ENCODE measurements at regions of chr5 and their contacts with region 1.

Region 1: GRCh38 chr5:43401827-43402226 is 10.4 kb downstream of the CCL28 start:
- DNase-seq: peak; percentile 72
- ATAC-seq: peak; percentile 100
- H3K4me3 ChIP-seq: peak overlapping the region; percentile 53 to 78 (median 59)
- H3K27ac ChIP-seq: peak overlapping the region; percentile 71
- H3K4me1 ChIP-seq: peaks cover 10% of the 10 kb centered on the region
- H3K27me3 ChIP-seq: no peaks in the 10 kb centered on the region
- CTCF ChIP-seq: peak; percentile 63
- EP300 ChIP-seq: no peak
- POLR2A ChIP-seq: 0 out of 4 replicates have a peak, but pooled peaks of 1 of the 2 experiments have one; percentile 13
- RAD21 ChIP-seq: peak; percentile 52

Region 2: GRCh38 chr5:43313035-43313853 is 88.6 kb before region 1 on chr5 and contains the start of gene HMGCS1:
- CTCF ChIA-PET with region 1: no interaction called
- POLR2A ChIA-PET with region 1: interaction called, 21 read pairs
- in situ Hi-C with region 1: no loop called
- intact Hi-C with region 1: no loop called
- DNase-seq: peak; percentile 98
- ATAC-seq: peak; percentile 96
- H3K4me3 ChIP-seq: peak within 1 kb of the TSS; percentile 88 to 98 (median 88)
- H3K27ac ChIP-seq: peak within 1 kb of the TSS; percentile 94
- H3K4me1 ChIP-seq: peaks cover 48% of the 10 kb centered on the region
- H3K27me3 ChIP-seq: no peaks in the 10 kb centered on the region; a peak in 1 of 5 replicates
- CTCF ChIP-seq: peak; percentile 22; the same call in 1 of the 2 replicates
- EP300 ChIP-seq: peak in 1 of 2 experiments; percentile 78; a peak in 2 of 4 replicates
- POLR2A ChIP-seq: peak; percentile 98 to 99
- RAD21 ChIP-seq: 0 out of 2 replicates have a peak, but pooled peaks have one; percentile 25
- total RNA-seq, gene HMGCS1: 318 and 569 TPM in 2 replicates

Region 3: GRCh38 chr5:43412156-43412555 is 10.3 kb after region 1 on chr5 and contains the start of gene CCL28:
- CTCF ChIA-PET with region 1: no interaction called
- POLR2A ChIA-PET with region 1: interaction called, 15 read pairs
- in situ Hi-C with region 1: no loop called
- intact Hi-C with region 1: no loop called
- DNase-seq: no peak
- ATAC-seq: peak; percentile 84
- H3K4me3 ChIP-seq: peak within 1 kb of the TSS in 2 of 3 experiments; percentile 32 to 33; a peak in 3 of 6 replicates
- H3K27ac ChIP-seq: no peak within 1 kb of the TSS
- H3K4me1 ChIP-seq: peaks cover 25% of the 10 kb centered on the region
- H3K27me3 ChIP-seq: no peaks in the 10 kb centered on the region; a peak in 2 of 5 replicates
- CTCF ChIP-seq: no peak
- EP300 ChIP-seq: no peak
- POLR2A ChIP-seq: no peak
- RAD21 ChIP-seq: no peak
- total RNA-seq, gene CCL28: not detected in 2 replicates

Region 4: GRCh38 chr5:43422143-43422542 is 20.3 kb after region 1 on chr5:
- CTCF ChIA-PET with region 1: no interaction called
- POLR2A ChIA-PET with region 1: interaction called, 16 read pairs
- in situ Hi-C with region 1: no loop called
- intact Hi-C with region 1: no loop called
- DNase-seq: peak; percentile 62
- ATAC-seq: peak; percentile 86
- H3K4me3 ChIP-seq: peak overlapping the region in 1 of 3 experiments; percentile 7; a peak in 2 of 6 replicates
- H3K27ac ChIP-seq: peak overlapping the region; percentile 30
- H3K4me1 ChIP-seq: peaks cover 37% of the 10 kb centered on the region
- H3K27me3 ChIP-seq: no peaks in the 10 kb centered on the region
- CTCF ChIP-seq: no peak
- EP300 ChIP-seq: peak in 1 of 2 experiments; percentile 38; a peak in 2 of 4 replicates
- POLR2A ChIP-seq: no peak
- RAD21 ChIP-seq: no peak

Region 5: GRCh38 chr5:43432473-43433365 is 30.9 kb after region 1 on chr5:
- CTCF ChIA-PET with region 1: no interaction called
- POLR2A ChIA-PET with region 1: interaction called, 4 read pairs
- in situ Hi-C with region 1: no loop called
- intact Hi-C with region 1: loop called (anchors 1 kb)
- DNase-seq: peak; percentile 98
- ATAC-seq: peak; percentile 96
- H3K4me3 ChIP-seq: peak overlapping the region in 2 of 3 experiments; percentile 29 to 30; a peak in 1 of 6 replicates
- H3K27ac ChIP-seq: peak overlapping the region; percentile 51
- H3K4me1 ChIP-seq: peaks cover 72% of the 10 kb centered on the region
- H3K27me3 ChIP-seq: no peaks in the 10 kb centered on the region
- CTCF ChIP-seq: no peak
- EP300 ChIP-seq: peak; percentile 52 to 94; a peak in 3 of 4 replicates
- POLR2A ChIP-seq: no peak
- RAD21 ChIP-seq: no peak

Region 6: DNA sequence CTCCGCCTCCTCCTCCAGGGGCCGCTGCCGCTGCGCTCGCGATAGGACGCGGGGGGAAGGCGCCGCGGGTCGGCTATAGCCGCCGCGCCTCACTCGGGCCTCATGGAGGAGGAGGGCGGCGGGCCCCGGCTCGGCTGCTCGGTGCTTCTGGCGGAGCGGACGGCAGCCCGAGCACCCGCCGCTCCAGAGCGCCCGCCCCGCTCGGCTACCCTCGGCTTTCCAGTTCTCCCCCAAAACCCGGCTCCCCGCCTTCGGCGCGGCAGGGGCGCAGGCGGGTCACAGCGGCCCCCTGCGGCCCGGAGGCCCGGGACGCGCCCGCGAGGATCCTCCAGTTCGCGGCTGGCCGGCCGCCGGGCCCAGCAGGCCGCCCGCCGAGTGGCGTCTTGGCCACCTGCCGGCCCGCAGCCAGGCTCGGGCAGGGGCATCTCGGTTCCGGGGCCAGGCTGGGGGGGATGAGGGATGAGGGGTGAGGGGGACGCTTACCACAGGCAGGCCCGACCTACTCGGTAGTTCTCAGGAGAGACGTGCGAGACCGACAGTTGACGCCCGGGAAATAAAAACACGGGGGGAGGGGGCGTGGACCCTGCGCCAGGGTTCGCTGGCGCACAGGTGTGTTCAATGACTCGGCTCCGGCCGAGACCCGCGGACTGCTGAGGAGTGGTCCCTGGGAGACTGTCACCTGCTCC is 155.2 kb after region 1 on chr5 and contains the start of gene PAIP1:
- CTCF ChIA-PET with region 1: no interaction called
- POLR2A ChIA-PET with region 1: no interaction called
- in situ Hi-C with region 1: no loop called
- intact Hi-C with region 1: loop called (anchors 5 kb)
- DNase-seq: peak; percentile 66
- ATAC-seq: peak; percentile 89
- H3K4me3 ChIP-seq: peak within 1 kb of the TSS; percentile 77 to 90 (median 84)
- H3K27ac ChIP-seq: peak within 1 kb of the TSS; percentile 95
- H3K4me1 ChIP-seq: peaks cover 48% of the 10 kb centered on the region
- H3K27me3 ChIP-seq: no peaks in the 10 kb centered on the region; a peak in 2 of 5 replicates
- CTCF ChIP-seq: peak; percentile 51; the same call in 1 of the 2 replicates
- EP300 ChIP-seq: no peak
- POLR2A ChIP-seq: peak; percentile 54 to 72
- RAD21 ChIP-seq: peak; percentile 48
- total RNA-seq, gene PAIP1: 116 and 141 TPM in 2 replicates